AG04450 (cell line): ENCODE measurements at regions of chr2 and their contacts with region 1.

Region 1: GRCh38 chr2:21042958-21043743 is 722 bp downstream of the APOB start:
- DNase-seq: peak; percentile 6
- H3K4me3 ChIP-seq: no peak overlapping the region
- H3K27ac ChIP-seq: no peak overlapping the region
- H3K27me3 ChIP-seq: peaks cover 9% of the 10 kb centered on the region
- CTCF ChIP-seq: peak; percentile 98

Region 2: DNA sequence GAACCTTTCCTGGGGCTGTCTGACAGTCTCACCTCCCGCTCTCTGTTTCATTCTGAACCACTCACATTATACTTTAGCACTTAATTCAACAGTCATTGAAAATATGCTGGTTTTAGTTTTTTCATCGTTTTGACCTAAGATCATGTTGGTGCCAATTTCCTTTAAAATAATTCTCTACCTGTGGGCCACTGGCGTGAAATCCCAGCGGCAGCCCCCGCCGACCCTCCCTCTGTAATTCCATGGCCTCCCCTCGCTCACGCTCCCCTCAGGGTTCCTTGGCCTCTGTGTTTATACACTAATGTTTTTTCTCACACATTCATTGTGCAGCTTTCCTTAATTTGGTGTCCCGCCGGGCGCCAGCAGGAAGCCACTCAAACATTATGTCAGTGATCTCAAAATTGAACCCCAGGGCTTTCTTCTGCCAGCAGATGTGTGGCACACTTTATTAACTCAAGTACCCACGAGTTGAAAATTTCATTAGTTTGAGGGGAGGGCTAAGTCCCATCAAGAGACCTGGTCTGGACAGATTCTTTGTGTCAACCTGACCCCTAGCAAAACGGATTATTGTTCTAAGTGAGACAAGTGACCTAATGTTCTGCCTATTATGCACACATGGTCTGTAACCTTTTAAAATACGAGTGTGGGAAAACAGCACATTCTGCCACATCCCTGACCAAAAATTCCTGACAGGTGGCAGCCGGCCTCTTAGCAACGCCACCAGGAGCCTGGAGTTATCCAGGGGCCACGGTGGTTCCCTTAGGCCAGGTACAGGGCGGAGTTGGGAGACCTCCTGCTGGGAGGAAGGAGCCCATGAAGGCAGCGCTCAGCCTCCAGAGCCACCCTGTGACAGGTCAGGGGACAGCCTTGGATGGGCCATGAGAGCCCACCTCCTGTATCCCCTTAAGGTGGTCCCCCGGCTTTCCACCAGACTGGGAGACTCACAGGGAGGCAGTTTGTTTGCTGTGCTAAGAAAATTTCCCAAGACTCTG is 52.4 kb before region 1 on chr2:
- CTCF ChIA-PET with region 1: no interaction called
- POLR2A ChIA-PET with region 1: no interaction called
- DNase-seq: no peak
- H3K4me3 ChIP-seq: no peak overlapping the region
- H3K27ac ChIP-seq: no peak overlapping the region
- H3K27me3 ChIP-seq: peaks cover 4% of the 10 kb centered on the region
- CTCF ChIP-seq: no peak

Region 3: DNA sequence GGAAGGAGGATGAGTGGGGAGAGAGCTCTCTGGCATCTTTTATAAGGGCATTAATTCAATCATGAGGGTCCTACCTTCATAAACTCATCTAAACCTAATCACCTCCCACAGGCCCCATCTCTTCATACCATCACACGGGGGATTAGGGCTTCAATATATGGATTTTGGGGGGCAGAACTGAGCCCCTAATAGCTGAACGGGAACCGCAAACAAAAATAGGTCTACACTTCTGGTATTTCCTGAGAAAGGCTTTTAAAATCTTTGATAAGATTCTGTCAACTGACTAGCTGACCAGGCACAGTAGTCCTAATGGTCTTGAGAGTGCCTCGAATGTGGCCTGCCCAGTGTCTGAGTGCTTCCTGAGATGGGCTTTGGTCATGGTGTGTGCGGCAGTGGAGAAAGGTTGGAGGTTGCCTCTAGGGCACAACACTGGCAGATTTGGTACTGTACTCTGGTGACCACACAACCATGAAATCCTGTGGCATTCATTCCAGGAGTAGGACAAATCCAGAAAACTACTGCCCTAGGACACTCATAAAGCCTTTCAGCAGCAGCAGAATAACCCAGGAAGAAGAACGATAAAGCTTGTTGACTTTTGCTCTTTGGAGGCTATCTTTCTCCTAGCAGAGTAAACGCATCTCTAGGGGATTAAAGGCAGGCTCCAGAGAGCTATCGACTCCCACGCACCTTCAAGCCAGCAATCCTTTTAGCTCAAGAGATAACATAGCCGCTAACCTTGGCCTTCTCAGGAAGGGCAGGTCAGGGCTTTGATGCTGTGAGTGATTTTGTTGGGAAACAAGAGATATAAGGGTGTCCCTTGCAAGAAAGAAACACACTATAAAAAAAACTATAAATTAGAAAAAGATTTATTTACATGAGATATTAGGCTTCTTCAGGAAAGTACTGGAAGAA is 13.0 kb after region 1 on chr2:
- CTCF ChIA-PET with region 1: interaction called, 10 read pairs
- POLR2A ChIA-PET with region 1: no interaction called
- DNase-seq: no peak
- H3K4me3 ChIP-seq: no peak overlapping the region
- H3K27ac ChIP-seq: no peak overlapping the region
- H3K27me3 ChIP-seq: no peaks in the 10 kb centered on the region
- CTCF ChIP-seq: no peak

Region 4: GRCh38 chr2:21096458-21096857 is 53.3 kb after region 1 on chr2:
- CTCF ChIA-PET with region 1: no interaction called
- POLR2A ChIA-PET with region 1: no interaction called
- DNase-seq: no peak
- H3K4me3 ChIP-seq: no peak overlapping the region
- H3K27ac ChIP-seq: no peak overlapping the region
- H3K27me3 ChIP-seq: no peaks in the 10 kb centered on the region
- CTCF ChIP-seq: no peak